CD8-positive, alpha-beta T cell (primary cell): ENCODE measurements at regions of chr2 and their contacts with region 1.

Region 1: GRCh38 chr2:65507102-65508069 is 75.0 kb upstream of the SPRED2 start:
- DNase-seq: no peak
- ATAC-seq: no peak
- H3K4me3 ChIP-seq: no peak overlapping the region
- H3K4me3 Mint-ChIP-seq: no peak overlapping the region
- H3K27ac ChIP-seq: no peak overlapping the region
- H3K27ac Mint-ChIP-seq: no peak overlapping the region
- H3K4me1 ChIP-seq: no peaks in the 10 kb centered on the region
- H3K4me1 Mint-ChIP-seq: no peaks in the 10 kb centered on the region
- H3K27me3 ChIP-seq: no peaks in the 10 kb centered on the region
- H3K27me3 Mint-ChIP-seq: peaks cover 3% of the 10 kb centered on the region
- CTCF ChIP-seq: no peak

Region 2: GRCh38 chr2:65443509-65444201 is 63.7 kb before region 1 on chr2:
- CTCF ChIA-PET with region 1: no interaction called
- POLR2A ChIA-PET with region 1: no interaction called
- intact Hi-C with region 1: no loop called
- DNase-seq: no peak
- ATAC-seq: no peak
- H3K4me3 ChIP-seq: no peak overlapping the region
- H3K4me3 Mint-ChIP-seq: no peak overlapping the region
- H3K27ac ChIP-seq: no peak overlapping the region
- H3K27ac Mint-ChIP-seq: no peak overlapping the region
- H3K4me1 ChIP-seq: no peaks in the 10 kb centered on the region
- H3K4me1 Mint-ChIP-seq: no peaks in the 10 kb centered on the region
- H3K27me3 ChIP-seq: no peaks in the 10 kb centered on the region
- H3K27me3 Mint-ChIP-seq: peaks cover 6% of the 10 kb centered on the region
- CTCF ChIP-seq: no peak

Region 3: DNA sequence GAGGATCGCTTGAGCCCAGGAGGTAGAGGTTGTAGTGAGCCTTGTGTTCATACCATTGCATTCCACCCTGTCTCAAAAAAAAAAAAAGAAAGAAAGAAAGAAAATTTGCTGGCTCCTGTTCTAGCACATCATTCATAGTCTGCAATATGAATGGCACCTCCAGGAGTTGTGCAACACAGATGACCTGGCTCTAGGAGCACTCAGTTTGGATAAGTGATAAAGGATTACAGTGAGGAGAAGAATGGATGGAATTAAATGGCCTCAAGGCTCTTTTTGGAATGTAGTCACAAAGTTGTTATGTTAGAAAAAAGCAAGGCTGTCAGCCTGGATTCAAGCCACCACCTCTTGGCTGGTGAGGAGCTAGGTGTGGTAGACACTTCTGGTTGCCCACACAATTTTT is 53.5 kb before region 1 on chr2:
- CTCF ChIA-PET with region 1: no interaction called
- POLR2A ChIA-PET with region 1: no interaction called
- intact Hi-C with region 1: loop called in 1 of 2 experiments (anchors 2 kb)
- DNase-seq: no peak
- ATAC-seq: no peak
- H3K4me3 ChIP-seq: no peak overlapping the region
- H3K4me3 Mint-ChIP-seq: no peak overlapping the region
- H3K27ac ChIP-seq: no peak overlapping the region
- H3K27ac Mint-ChIP-seq: no peak overlapping the region
- H3K4me1 ChIP-seq: no peaks in the 10 kb centered on the region
- H3K4me1 Mint-ChIP-seq: no peaks in the 10 kb centered on the region
- H3K27me3 ChIP-seq: no peaks in the 10 kb centered on the region
- H3K27me3 Mint-ChIP-seq: peaks cover 22% of the 10 kb centered on the region
- CTCF ChIP-seq: no peak

Region 4: GRCh38 chr2:65479524-65479923 is 27.9 kb before region 1 on chr2:
- CTCF ChIA-PET with region 1: no interaction called
- POLR2A ChIA-PET with region 1: no interaction called
- intact Hi-C with region 1: no loop called
- DNase-seq: no peak
- ATAC-seq: no peak
- H3K4me3 ChIP-seq: no peak overlapping the region
- H3K4me3 Mint-ChIP-seq: no peak overlapping the region
- H3K27ac ChIP-seq: no peak overlapping the region
- H3K27ac Mint-ChIP-seq: no peak overlapping the region
- H3K4me1 ChIP-seq: no peaks in the 10 kb centered on the region
- H3K4me1 Mint-ChIP-seq: no peaks in the 10 kb centered on the region
- H3K27me3 ChIP-seq: peaks cover 0 to 2% of the 10 kb centered on the region in 2 experiments
- H3K27me3 Mint-ChIP-seq: peaks cover 4% of the 10 kb centered on the region
- CTCF ChIP-seq: no peak